CD8-positive, alpha-beta T cell (primary cell): ENCODE measurements at regions of chr4 and their contacts with region 1.

Region 1: DNA sequence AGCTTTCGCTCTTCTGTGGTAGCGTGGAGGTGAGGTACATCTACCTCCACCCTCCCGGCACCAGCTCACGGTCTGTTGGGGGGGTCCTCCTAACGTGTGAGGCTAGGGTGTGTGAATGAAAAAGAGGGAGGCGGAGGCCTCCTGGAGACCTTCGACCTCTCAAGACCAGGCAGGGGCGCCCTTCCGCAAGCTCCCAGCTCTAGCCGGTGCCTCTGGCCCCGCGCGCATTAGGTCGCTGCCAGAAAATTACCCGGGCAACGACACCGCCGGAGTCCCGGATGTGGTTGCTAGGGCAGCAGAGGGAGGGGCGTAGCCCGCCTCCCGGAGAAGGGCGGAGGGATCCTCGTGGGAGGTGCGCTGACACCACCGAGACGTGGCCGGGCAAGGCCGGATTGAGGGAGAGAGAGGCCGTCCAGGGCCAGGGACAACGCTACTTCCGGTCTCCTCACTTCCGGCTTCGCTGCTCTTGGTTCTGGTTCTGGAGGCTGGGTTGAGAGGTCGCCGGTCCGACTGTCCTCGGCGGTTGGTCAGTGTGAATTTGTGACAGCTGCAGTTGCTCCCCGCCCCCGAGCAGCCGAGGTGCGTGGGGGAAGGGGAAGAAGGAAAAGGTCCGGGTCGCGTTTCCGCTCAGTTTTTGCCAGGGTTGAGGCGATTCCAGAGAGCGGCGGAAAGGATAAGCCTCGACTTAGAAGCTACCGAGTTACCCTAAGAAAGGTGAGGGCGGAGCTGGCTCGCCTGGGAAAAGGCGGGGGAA is at the starts of genes ARFIP1 and TIGD4:
- DNase-seq: peak; percentile 87 to 96 (median 94)
- ATAC-seq: peak; percentile 83
- H3K4me3 ChIP-seq: peak within 1 kb of the TSS; percentile 82 to 97
- H3K4me3 Mint-ChIP-seq: peak within 1 kb of the TSS; percentile 99
- H3K27ac ChIP-seq: peak within 1 kb of the TSS; percentile 77 to 86
- H3K27ac Mint-ChIP-seq: peak within 1 kb of the TSS; percentile 96
- H3K4me1 ChIP-seq: peaks cover 25% of the 10 kb centered on the region
- H3K4me1 Mint-ChIP-seq: peaks cover 45% of the 10 kb centered on the region
- H3K27me3 ChIP-seq: peaks cover 0 to 4% of the 10 kb centered on the region in 2 experiments
- H3K27me3 Mint-ChIP-seq: no peaks in the 10 kb centered on the region
- CTCF ChIP-seq: no peak
- total RNA-seq, gene ARFIP1: 1.9 to 2.8 TPM
- total RNA-seq, gene TIGD4: 0.11 TPM in 1 of 2 experiments, not detected in the other

Region 2: GRCh38 chr4:151015459-151016347 is 1764.0 kb before region 1 on chr4:
- CTCF ChIA-PET with region 1: no interaction called
- POLR2A ChIA-PET with region 1: no interaction called
- intact Hi-C with region 1: loop called (anchors 1 to 5 kb)
- DNase-seq: peak; percentile 68 to 95 (median 81)
- ATAC-seq: peak; percentile 74
- H3K4me3 ChIP-seq: peak overlapping the region; percentile 89 to 96
- H3K4me3 Mint-ChIP-seq: peak overlapping the region; percentile 100
- H3K27ac ChIP-seq: peak overlapping the region; percentile 96 to 97
- H3K27ac Mint-ChIP-seq: peak overlapping the region; percentile 99
- H3K4me1 ChIP-seq: peaks cover 16% of the 10 kb centered on the region
- H3K4me1 Mint-ChIP-seq: peaks cover 33% of the 10 kb centered on the region
- H3K27me3 ChIP-seq: no peaks in the 10 kb centered on the region
- H3K27me3 Mint-ChIP-seq: no peaks in the 10 kb centered on the region
- CTCF ChIP-seq: no peak

Region 3: DNA sequence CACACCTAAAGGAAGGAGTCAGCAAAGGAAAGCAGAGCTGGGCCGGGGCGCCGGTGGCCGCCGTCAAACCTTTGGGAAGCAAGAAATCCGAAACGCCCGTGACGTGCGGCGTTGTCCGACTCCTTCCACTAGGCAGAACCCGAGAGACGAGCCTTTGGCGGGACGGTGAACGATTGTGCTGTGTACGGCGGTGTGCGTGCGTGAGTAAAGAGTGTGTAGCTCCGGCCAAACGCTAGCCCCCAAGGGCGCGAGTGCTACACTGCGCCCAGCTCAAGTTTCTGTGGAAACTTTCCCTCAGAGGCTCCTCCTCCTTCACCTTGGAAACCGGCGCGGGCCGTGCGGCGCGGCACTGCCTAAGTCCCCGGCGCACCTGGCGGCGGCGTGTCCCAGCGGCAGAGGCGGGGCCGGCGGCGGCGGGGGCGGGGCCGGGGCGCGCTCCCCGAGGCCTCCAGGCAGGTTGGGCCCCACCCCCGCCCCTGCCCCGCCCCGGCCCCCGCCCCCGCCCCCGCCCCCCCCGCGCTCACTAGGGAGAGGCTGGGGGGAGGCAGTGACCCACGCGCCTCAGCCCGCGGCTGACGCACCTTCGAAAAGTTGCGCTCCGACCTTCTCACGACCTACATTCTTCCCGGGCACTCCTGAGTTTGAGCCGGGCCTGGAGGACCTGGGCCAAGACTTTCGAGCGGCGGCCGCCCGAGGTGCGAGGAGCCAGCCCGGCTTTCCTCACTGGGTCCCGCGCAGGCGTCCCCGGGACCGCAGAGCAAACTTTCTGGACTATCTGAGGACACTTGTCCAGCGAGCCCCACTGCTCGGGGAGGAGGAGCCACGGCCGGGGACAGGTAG is 1370.8 kb before region 1 on chr4 and contains the start of gene FHIP1A:
- CTCF ChIA-PET with region 1: no interaction called
- POLR2A ChIA-PET with region 1: no interaction called
- intact Hi-C with region 1: loop called in 1 of 2 experiments (anchors 5 kb)
- DNase-seq: peak; percentile 60 to 87 (median 82)
- ATAC-seq: peak; percentile 96
- H3K4me3 ChIP-seq: peak within 1 kb of the TSS; percentile 60 to 66
- H3K4me3 Mint-ChIP-seq: peak within 1 kb of the TSS; percentile 93
- H3K27ac ChIP-seq: peak within 1 kb of the TSS in 1 of 2 experiments; percentile 24
- H3K27ac Mint-ChIP-seq: peak within 1 kb of the TSS; percentile 67
- H3K4me1 ChIP-seq: peaks cover 17% of the 10 kb centered on the region
- H3K4me1 Mint-ChIP-seq: peaks cover 25% of the 10 kb centered on the region
- H3K27me3 ChIP-seq: no peaks in the 10 kb centered on the region
- H3K27me3 Mint-ChIP-seq: peaks cover 18% of the 10 kb centered on the region
- CTCF ChIP-seq: no peak
- total RNA-seq, gene FHIP1A: 1.5 to 2.1 TPM

Region 4: DNA sequence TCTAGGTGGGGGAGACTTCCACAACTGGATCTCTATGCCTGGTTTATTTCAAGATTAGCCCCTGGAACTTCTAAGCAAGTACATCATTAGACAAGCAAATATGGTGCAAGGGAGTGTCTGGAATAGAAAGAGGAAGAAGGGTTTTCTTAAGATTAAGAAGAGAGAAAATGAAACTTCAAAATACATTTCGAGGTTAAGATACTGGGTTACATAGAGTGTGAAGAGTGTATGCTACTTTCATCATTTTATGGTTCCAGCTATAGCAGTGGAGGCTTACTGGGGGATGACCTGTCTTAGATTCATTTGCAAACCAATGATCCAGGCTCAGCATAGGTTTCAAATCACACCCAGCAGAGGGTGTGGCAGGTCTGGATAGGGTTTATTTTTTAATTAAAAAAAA is 874.5 kb before region 1 on chr4:
- CTCF ChIA-PET with region 1: no interaction called
- POLR2A ChIA-PET with region 1: no interaction called
- intact Hi-C with region 1: no loop called
- DNase-seq: no peak
- ATAC-seq: no peak
- H3K4me3 ChIP-seq: no peak overlapping the region
- H3K4me3 Mint-ChIP-seq: no peak overlapping the region
- H3K27ac ChIP-seq: no peak overlapping the region
- H3K27ac Mint-ChIP-seq: no peak overlapping the region
- H3K4me1 ChIP-seq: no peaks in the 10 kb centered on the region
- H3K4me1 Mint-ChIP-seq: no peaks in the 10 kb centered on the region
- H3K27me3 ChIP-seq: no peaks in the 10 kb centered on the region
- H3K27me3 Mint-ChIP-seq: peaks cover 3% of the 10 kb centered on the region
- CTCF ChIP-seq: no peak

Region 5: GRCh38 chr4:152535903-152536544 is 243.7 kb before region 1 on chr4 and contains the start of gene FBXW7:
- CTCF ChIA-PET with region 1: no interaction called
- POLR2A ChIA-PET with region 1: interaction called, 10 read pairs
- intact Hi-C with region 1: loop called (anchors 1 to 2 kb)
- DNase-seq: peak; percentile 99 to 100 (median 100)
- ATAC-seq: peak; percentile 77
- H3K4me3 ChIP-seq: peak within 1 kb of the TSS; percentile 79
- H3K4me3 Mint-ChIP-seq: peak within 1 kb of the TSS; percentile 87
- H3K27ac ChIP-seq: peak within 1 kb of the TSS; percentile 97 to 98
- H3K27ac Mint-ChIP-seq: peak within 1 kb of the TSS; percentile 97
- H3K4me1 ChIP-seq: peaks cover 52% of the 10 kb centered on the region
- H3K4me1 Mint-ChIP-seq: peaks cover 64% of the 10 kb centered on the region
- H3K27me3 ChIP-seq: no peaks in the 10 kb centered on the region
- H3K27me3 Mint-ChIP-seq: no peaks in the 10 kb centered on the region
- CTCF ChIP-seq: no peak
- total RNA-seq, gene FBXW7: 129 to 135 TPM

Region 6: DNA sequence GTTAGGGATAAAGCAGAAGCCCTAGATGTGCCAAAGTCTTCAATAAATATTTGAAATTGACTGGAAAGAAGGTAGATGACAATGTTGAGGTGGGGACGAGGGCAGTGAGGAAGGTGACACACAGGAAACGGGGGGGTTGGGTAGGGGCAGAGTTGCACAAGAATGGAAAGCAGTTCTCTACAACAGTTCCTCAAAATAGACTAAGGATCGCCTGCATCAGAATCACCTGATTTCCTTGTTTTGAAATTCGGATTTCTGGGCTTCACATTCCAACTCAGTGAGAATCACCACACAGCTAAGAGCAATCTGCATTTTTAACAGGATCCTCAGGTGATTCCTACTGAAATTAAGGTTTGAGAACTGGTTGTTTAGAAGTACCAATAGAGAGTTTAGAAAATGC is 70.7 kb after region 1 on chr4:
- CTCF ChIA-PET with region 1: no interaction called
- POLR2A ChIA-PET with region 1: no interaction called
- intact Hi-C with region 1: loop called in 1 of 2 experiments (anchors 1 kb)
- DNase-seq: peak in 7 of 9 experiments; percentile 18 to 57 (median 33)
- ATAC-seq: peak; percentile 69
- H3K4me3 ChIP-seq: no peak overlapping the region
- H3K4me3 Mint-ChIP-seq: no peak overlapping the region
- H3K27ac ChIP-seq: no peak overlapping the region
- H3K27ac Mint-ChIP-seq: no peak overlapping the region
- H3K4me1 ChIP-seq: peaks cover 4% of the 10 kb centered on the region
- H3K4me1 Mint-ChIP-seq: peaks cover 24% of the 10 kb centered on the region
- H3K27me3 ChIP-seq: no peaks in the 10 kb centered on the region
- H3K27me3 Mint-ChIP-seq: no peaks in the 10 kb centered on the region
- CTCF ChIP-seq: no peak

Region 7: GRCh38 chr4:153115322-153116290 is 335.9 kb after region 1 on chr4:
- CTCF ChIA-PET with region 1: no interaction called
- POLR2A ChIA-PET with region 1: interaction called, 3 read pairs
- intact Hi-C with region 1: loop called in 1 of 2 experiments (anchors 2 kb)
- DNase-seq: peak; percentile 41 to 92 (median 76)
- ATAC-seq: peak; percentile 52
- H3K4me3 ChIP-seq: peak overlapping the region in 1 of 2 experiments; percentile 31
- H3K4me3 Mint-ChIP-seq: no peak overlapping the region
- H3K27ac ChIP-seq: peak overlapping the region; percentile 58 to 78
- H3K27ac Mint-ChIP-seq: no peak overlapping the region
- H3K4me1 ChIP-seq: peaks cover 64% of the 10 kb centered on the region
- H3K4me1 Mint-ChIP-seq: peaks cover 9% of the 10 kb centered on the region
- H3K27me3 ChIP-seq: no peaks in the 10 kb centered on the region
- H3K27me3 Mint-ChIP-seq: no peaks in the 10 kb centered on the region
- CTCF ChIP-seq: no peak

Region 8: GRCh38 chr4:153249199-153250041 is 469.7 kb after region 1 on chr4:
- CTCF ChIA-PET with region 1: no interaction called
- POLR2A ChIA-PET with region 1: no interaction called
- intact Hi-C with region 1: loop called in 1 of 2 experiments (anchors 1 kb)
- DNase-seq: peak; percentile 59 to 94 (median 81)
- ATAC-seq: peak; percentile 98
- H3K4me3 ChIP-seq: peak overlapping the region; percentile 53 to 57
- H3K4me3 Mint-ChIP-seq: peak overlapping the region; percentile 89
- H3K27ac ChIP-seq: peak overlapping the region; percentile 46 to 60
- H3K27ac Mint-ChIP-seq: peak overlapping the region; percentile 85
- H3K4me1 ChIP-seq: peaks cover 11% of the 10 kb centered on the region
- H3K4me1 Mint-ChIP-seq: peaks cover 20% of the 10 kb centered on the region
- H3K27me3 ChIP-seq: no peaks in the 10 kb centered on the region
- H3K27me3 Mint-ChIP-seq: no peaks in the 10 kb centered on the region
- CTCF ChIP-seq: no peak